PC-9 (cell line): ENCODE measurements at regions of chr22 and their contacts with region 1.

Region 1: DNA sequence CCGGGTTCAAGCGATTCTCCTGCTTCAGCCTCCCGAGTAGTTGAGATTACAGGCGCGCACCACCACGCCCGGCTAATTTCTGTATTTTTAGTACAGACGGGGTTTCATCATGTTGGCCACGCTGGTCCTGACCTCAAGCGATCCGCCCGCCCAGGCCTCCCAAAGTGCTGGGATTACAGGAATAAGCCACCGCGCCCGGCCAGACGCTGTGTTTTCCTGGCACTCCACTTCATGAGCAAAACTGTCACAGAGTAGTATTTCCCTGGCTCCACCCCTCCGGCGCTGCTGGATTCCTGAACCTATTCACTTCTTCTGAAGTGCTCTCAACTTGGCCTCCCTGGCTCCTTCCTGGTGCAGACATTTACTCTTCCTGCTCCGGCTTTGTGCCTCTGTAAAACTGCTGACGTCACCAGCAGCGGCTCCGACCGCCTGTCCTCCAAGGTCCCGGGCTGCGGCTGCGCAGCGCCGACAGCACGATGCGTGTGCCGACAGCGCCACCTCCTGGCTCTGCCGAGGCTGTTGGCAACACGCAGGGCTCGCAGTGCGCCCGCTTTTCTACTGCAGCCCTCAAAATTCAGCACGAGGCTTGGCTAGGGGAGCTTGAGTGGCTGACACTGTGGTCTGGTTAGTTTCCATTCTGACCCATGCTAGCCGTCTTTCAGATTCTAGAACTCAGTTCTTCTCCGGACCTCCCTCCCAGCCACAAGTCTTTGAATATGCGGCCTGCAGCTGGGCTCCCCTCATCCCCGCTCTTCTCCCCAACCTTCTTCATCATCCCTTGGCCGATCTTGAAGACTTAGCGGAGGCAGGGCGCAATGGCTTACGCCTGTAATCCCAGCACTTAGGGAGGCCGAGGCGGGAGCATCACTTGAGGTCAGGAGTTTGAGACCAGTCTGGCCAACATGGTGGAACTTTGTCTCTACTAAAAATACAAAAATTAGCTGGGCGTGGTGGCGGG is 36.6 kb downstream of the APOL3 start:
- DNase-seq: peak; percentile 94 to 97
- H3K4me3 ChIP-seq: peak overlapping the region; percentile 50
- H3K27ac ChIP-seq: peak overlapping the region; percentile 76
- H3K4me1 ChIP-seq: peaks cover 8% of the 10 kb centered on the region
- H3K27me3 ChIP-seq: 0 out of 2 replicates have a peak, but pooled peaks cover 3% of the 10 kb centered on the region
- CTCF ChIP-seq: peak; percentile 99

Region 2: DNA sequence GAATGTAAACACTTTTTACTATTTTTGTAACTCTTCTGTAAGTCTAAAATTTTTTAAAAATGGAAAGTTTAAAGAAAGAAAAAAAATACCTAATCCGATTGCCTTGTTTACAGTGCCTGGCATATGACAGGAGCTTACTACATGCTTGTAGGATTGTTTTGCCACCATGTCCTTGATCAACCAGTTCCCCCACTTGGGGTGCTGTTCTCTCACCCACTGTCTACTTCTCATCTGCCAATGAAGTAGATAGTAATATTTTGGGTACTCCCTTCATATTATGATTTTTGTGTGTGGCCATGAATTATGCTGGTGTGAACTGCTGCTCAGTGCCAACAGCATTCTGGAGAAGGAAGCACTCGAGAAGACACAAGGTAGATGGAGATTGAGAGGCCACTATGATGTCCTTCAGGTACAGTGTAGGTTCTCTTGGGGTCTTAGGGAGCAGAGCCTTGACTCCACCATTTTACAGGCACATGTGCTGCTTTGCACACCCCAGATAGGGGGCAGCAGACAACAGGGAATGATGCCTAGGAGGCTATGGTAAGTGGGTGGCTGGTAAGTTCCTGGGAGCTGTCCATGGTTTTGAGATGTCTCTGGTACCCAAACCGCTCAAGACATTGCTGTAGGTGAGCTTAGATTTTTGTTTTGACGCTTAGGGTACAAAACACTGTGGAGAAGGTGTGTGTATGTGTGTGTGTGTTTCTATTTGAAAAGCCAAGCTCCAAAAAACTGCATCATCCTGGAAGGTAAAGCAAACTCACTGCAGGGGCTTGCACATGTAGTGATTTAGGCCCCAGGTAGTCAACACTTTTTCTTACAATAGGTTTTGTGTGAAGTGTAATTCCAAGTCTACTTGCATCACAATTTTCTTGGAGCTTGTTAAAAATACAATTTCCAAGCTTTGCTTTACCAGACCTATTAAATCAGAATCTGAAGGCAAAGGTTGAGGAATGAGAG is 1709.2 kb before region 1 on chr22:
- CTCF ChIA-PET with region 1: no interaction called
- POLR2A ChIA-PET with region 1: no interaction called
- intact Hi-C with region 1: loop called (anchors 10 kb)
- DNase-seq: peak; percentile 62 to 67
- H3K4me3 ChIP-seq: no peak overlapping the region
- H3K27ac ChIP-seq: no peak overlapping the region
- H3K4me1 ChIP-seq: no peaks in the 10 kb centered on the region
- H3K27me3 ChIP-seq: no peaks in the 10 kb centered on the region
- CTCF ChIP-seq: peak; percentile 82

Region 3: DNA sequence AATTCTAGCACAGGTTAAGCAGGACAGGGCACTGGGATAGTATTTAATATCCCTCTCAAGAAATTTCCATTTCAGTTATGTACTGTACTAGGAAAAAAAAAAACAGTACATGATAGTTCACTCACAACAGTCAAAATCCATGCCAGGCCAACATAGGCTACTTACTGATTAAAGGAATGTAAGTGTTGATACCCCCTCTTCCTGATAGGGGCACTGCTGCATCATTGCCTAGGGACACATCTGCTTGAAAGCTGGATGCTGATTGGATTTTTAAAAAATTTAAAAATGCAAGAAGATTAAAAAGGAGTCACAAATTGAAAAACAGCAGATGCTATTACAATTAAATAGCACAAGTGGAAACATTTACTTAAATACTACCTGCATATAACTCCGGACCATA is 362.9 kb before region 1 on chr22:
- CTCF ChIA-PET with region 1: no interaction called
- POLR2A ChIA-PET with region 1: no interaction called
- intact Hi-C with region 1: loop called (anchors 5 kb)
- DNase-seq: no peak
- H3K4me3 ChIP-seq: no peak overlapping the region
- H3K27ac ChIP-seq: no peak overlapping the region
- H3K4me1 ChIP-seq: 0 out of 2 replicates have a peak, but pooled peaks cover 3% of the 10 kb centered on the region
- H3K27me3 ChIP-seq: no peaks in the 10 kb centered on the region
- CTCF ChIP-seq: peak; percentile 43; the same call in 1 of the 2 replicates

Region 4: GRCh38 chr22:35930933-35931332 is 193.0 kb before region 1 on chr22:
- CTCF ChIA-PET with region 1: interaction called, 3 read pairs
- POLR2A ChIA-PET with region 1: no interaction called
- intact Hi-C with region 1: loop called (anchors 1 kb)
- DNase-seq: peak; percentile 3 to 48
- H3K4me3 ChIP-seq: no peak overlapping the region
- H3K27ac ChIP-seq: no peak overlapping the region
- H3K4me1 ChIP-seq: no peaks in the 10 kb centered on the region
- H3K27me3 ChIP-seq: no peaks in the 10 kb centered on the region
- CTCF ChIP-seq: peak; percentile 73

Region 5: GRCh38 chr22:36036167-36036624 is 87.8 kb before region 1 on chr22:
- CTCF ChIA-PET with region 1: no interaction called
- POLR2A ChIA-PET with region 1: no interaction called
- intact Hi-C with region 1: no loop called
- DNase-seq: no peak
- H3K4me3 ChIP-seq: no peak overlapping the region
- H3K27ac ChIP-seq: no peak overlapping the region
- H3K4me1 ChIP-seq: no peaks in the 10 kb centered on the region
- H3K27me3 ChIP-seq: no peaks in the 10 kb centered on the region
- CTCF ChIP-seq: no peak

Region 6: DNA sequence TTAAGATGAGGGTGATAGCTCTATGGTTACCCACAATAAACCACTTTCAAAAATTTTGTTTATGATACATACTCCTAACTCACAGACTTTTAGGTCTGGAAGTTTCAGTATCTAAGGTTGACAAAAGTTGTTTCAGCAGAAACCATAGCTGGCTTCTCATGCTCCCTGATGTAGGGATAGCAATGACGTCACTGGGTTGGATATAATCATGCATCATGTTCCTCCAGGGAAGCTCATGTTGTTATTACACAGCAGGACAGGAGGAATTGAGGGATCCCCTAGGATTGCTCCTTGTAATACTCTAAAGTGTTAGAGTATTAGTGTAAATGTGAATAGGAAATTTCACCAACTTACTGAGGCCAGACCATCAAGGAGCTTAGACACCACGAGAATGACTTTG is 13.0 kb after region 1 on chr22:
- CTCF ChIA-PET with region 1: interaction called, 14 read pairs
- POLR2A ChIA-PET with region 1: no interaction called
- intact Hi-C with region 1: no loop called
- DNase-seq: no peak
- H3K4me3 ChIP-seq: no peak overlapping the region
- H3K27ac ChIP-seq: no peak overlapping the region
- H3K4me1 ChIP-seq: no peaks in the 10 kb centered on the region
- H3K27me3 ChIP-seq: peaks cover 25% of the 10 kb centered on the region
- CTCF ChIP-seq: no peak